ENCODE measurements at regions of chr18 and their contacts with region 1.

Region 1: DNA sequence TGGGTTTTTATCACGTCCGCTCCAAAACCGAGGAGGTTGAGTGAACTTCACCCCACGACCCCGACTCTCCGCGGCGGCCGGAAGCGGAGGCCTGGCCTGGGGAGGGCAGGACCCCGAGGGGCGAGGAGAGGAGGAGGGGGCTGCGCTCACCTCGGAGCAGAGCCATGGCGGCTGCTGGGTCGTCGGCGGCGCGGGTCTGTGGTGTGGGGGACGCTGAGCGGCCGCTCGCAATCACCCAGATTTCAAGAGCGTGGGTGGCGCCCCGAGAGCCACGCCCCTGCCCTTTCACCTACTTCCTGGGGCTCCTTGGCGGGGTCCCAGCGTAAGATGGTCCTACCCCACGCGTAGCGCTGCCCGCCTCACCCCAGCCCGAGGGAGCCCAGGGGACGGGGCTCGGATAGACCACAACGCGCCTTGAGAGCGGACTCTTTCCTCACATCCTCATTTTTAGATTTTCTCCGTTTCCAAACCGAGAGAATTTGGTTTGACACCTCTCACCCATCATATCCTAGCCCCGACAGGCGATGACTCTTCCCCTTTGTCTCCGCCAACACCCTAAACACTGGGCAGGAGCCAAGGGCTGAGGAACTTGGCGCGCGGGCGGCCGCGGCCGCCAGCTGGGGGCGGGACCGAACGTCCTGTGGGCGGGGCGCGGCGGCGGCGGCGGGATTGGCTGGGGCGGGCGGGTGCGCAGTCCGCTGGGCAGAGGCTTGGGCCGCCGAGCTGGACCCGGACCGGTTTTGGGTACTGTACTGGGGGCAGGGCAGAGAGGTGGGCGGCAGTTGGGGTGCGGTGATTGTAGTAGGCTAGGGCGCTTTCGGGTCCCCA is at the start of gene ACAA2:
- DNase-seq: peak; percentile 48 to 87 (median 60)
- ATAC-seq: peak; percentile 93
- H3K4me3 ChIP-seq: peak within 1 kb of the TSS; percentile 87
- H3K4me3 Mint-ChIP-seq: peak within 1 kb of the TSS; percentile 89 to 99 (median 96)
- H3K27ac ChIP-seq: peak within 1 kb of the TSS; percentile 90
- H3K27ac Mint-ChIP-seq: peak within 1 kb of the TSS; percentile 91 to 99 (median 97)
- H3K4me1 ChIP-seq: peaks cover 20 to 39% of the 10 kb centered on the region in 2 donors
- H3K4me1 Mint-ChIP-seq: peaks cover 42 to 70% (median 63%) of the 10 kb centered on the region in 7 donors
- H3K27me3 ChIP-seq: no peaks in the 10 kb centered on the region
- H3K27me3 Mint-ChIP-seq: no peaks in the 10 kb centered on the region
- total RNA-seq, gene ACAA2: 15.4 to 94.7 (median 24.4) TPM

Region 2: GRCh38 chr18:48538531-48539405 is 1274.8 kb before region 1 on chr18 and contains the start of gene CTIF:
- CTCF ChIA-PET with region 1: no interaction called
- POLR2A ChIA-PET with region 1: no interaction called
- intact Hi-C with region 1: loop called in 1 of 2 experiments (anchors 5 kb)
- DNase-seq: peak; percentile 17 to 71 (median 37)
- ATAC-seq: peak; percentile 78
- H3K4me3 ChIP-seq: peak within 1 kb of the TSS; percentile 75
- H3K4me3 Mint-ChIP-seq: peak within 1 kb of the TSS; percentile 73 to 95 (median 88)
- H3K27ac ChIP-seq: peak within 1 kb of the TSS; percentile 19
- H3K27ac Mint-ChIP-seq: peak within 1 kb of the TSS in 1 of 9 donors; percentile 46
- H3K4me1 ChIP-seq: peaks cover 0 to 5% of the 10 kb centered on the region in 2 donors
- H3K4me1 Mint-ChIP-seq: peaks cover 0 to 17% (median 0%) of the 10 kb centered on the region in 7 donors
- H3K27me3 ChIP-seq: no peaks in the 10 kb centered on the region
- H3K27me3 Mint-ChIP-seq: peaks cover 1 to 31% (median 6%) of the 10 kb centered on the region in 5 donors
- total RNA-seq, gene CTIF: 1.3 to 11.2 (median 2.5) TPM

Region 3: DNA sequence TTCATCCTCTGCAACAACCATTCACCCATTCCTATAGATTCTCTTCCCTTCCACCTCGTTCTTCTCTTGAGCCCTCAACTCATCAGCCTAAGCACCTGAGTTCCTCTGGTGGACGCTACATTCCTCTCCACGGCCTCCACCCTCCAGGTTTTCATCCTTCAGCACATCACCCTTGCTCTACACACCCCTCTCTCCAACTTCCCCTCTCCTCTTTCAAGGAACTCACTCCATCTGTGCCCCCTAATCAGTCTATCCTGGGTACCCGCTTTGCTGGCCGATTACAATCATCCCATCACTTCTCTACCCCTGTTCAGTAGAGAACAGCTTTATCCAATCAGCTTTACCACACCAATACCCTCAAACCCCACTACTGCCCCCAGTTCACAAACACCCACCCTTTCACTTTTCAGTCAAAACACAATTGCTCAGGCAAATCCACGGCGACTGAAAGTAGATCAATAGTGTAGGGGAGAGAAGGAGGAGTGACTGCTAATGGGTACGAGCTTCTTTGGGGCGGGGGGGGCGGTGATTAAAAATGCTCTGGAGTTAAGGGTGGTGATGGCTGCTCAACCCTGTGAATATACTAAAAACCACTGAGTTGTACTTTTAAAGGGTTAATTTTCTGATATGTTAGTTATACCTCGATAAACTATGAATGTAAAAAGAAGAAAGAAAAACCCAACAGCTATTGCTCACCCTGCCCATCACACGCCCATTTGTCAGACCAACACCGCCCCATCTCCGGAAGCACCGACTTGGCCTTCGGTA is 353.9 kb before region 1 on chr18:
- CTCF ChIA-PET with region 1: no interaction called
- POLR2A ChIA-PET with region 1: interaction called, 3 read pairs
- intact Hi-C with region 1: loop called (anchors 1 kb)
- DNase-seq: peak in 3 of 9 donors; percentile 4 to 17 (median 5)
- ATAC-seq: peak; percentile 19
- H3K4me3 ChIP-seq: peak overlapping the region; percentile 86
- H3K4me3 Mint-ChIP-seq: peak overlapping the region; percentile 88 to 95 (median 94)
- H3K27ac ChIP-seq: peak overlapping the region; percentile 80
- H3K27ac Mint-ChIP-seq: peak overlapping the region; percentile 67 to 89 (median 83)
- H3K4me1 ChIP-seq: peaks cover 14 to 26% of the 10 kb centered on the region in 2 donors
- H3K4me1 Mint-ChIP-seq: peaks cover 34 to 62% (median 47%) of the 10 kb centered on the region in 7 donors
- H3K27me3 ChIP-seq: no peaks in the 10 kb centered on the region
- H3K27me3 Mint-ChIP-seq: peaks cover 0 to 6% (median 0%) of the 10 kb centered on the region in 5 donors

Region 4: GRCh38 chr18:49858309-49859020 is 44.9 kb after region 1 on chr18:
- CTCF ChIA-PET with region 1: no interaction called
- POLR2A ChIA-PET with region 1: interaction called, 7 read pairs
- intact Hi-C with region 1: loop called (anchors 1 to 2 kb)
- DNase-seq: peak; percentile 13 to 68 (median 33)
- ATAC-seq: no peak
- H3K4me3 ChIP-seq: no peak overlapping the region
- H3K4me3 Mint-ChIP-seq: no peak overlapping the region
- H3K27ac ChIP-seq: no peak overlapping the region
- H3K27ac Mint-ChIP-seq: peak overlapping the region in 2 of 9 donors; percentile 38 to 72
- H3K4me1 ChIP-seq: no peaks in the 10 kb centered on the region
- H3K4me1 Mint-ChIP-seq: peaks cover 0 to 6% (median 0%) of the 10 kb centered on the region in 7 donors
- H3K27me3 ChIP-seq: no peaks in the 10 kb centered on the region
- H3K27me3 Mint-ChIP-seq: peaks cover 0 to 3% (median 0%) of the 10 kb centered on the region in 5 donors

Region 5: GRCh38 chr18:49997558-49997957 is 184.0 kb after region 1 on chr18:
- CTCF ChIA-PET with region 1: no interaction called
- POLR2A ChIA-PET with region 1: no interaction called
- intact Hi-C with region 1: no loop called
- DNase-seq: no peak
- ATAC-seq: no peak
- H3K4me3 ChIP-seq: no peak overlapping the region
- H3K4me3 Mint-ChIP-seq: no peak overlapping the region
- H3K27ac ChIP-seq: no peak overlapping the region
- H3K27ac Mint-ChIP-seq: no peak overlapping the region
- H3K4me1 ChIP-seq: no peaks in the 10 kb centered on the region
- H3K4me1 Mint-ChIP-seq: no peaks in the 10 kb centered on the region
- H3K27me3 ChIP-seq: no peaks in the 10 kb centered on the region
- H3K27me3 Mint-ChIP-seq: peaks cover 0 to 9% (median 6%) of the 10 kb centered on the region in 5 donors

Region 6: GRCh38 chr18:50038448-50038847 is 224.9 kb after region 1 on chr18:
- CTCF ChIA-PET with region 1: no interaction called
- POLR2A ChIA-PET with region 1: no interaction called
- intact Hi-C with region 1: no loop called
- DNase-seq: no peak
- ATAC-seq: no peak
- H3K4me3 ChIP-seq: no peak overlapping the region
- H3K4me3 Mint-ChIP-seq: no peak overlapping the region
- H3K27ac ChIP-seq: no peak overlapping the region
- H3K27ac Mint-ChIP-seq: no peak overlapping the region
- H3K4me1 ChIP-seq: no peaks in the 10 kb centered on the region
- H3K4me1 Mint-ChIP-seq: peaks cover 0 to 6% (median 0%) of the 10 kb centered on the region in 7 donors
- H3K27me3 ChIP-seq: no peaks in the 10 kb centered on the region
- H3K27me3 Mint-ChIP-seq: peaks cover 10 to 21% (median 15%) of the 10 kb centered on the region in 5 donors

Region 7: GRCh38 chr18:50307738-50308470 is 494.4 kb after region 1 on chr18:
- CTCF ChIA-PET with region 1: no interaction called
- POLR2A ChIA-PET with region 1: no interaction called
- intact Hi-C with region 1: loop called in 1 of 2 experiments (anchors 5 kb)
- DNase-seq: peak; percentile 70 to 93 (median 89)
- ATAC-seq: peak; percentile 96
- H3K4me3 ChIP-seq: peak overlapping the region; percentile 45
- H3K4me3 Mint-ChIP-seq: peak overlapping the region; percentile 76 to 97 (median 92)
- H3K27ac ChIP-seq: peak overlapping the region; percentile 65
- H3K27ac Mint-ChIP-seq: peak overlapping the region; percentile 52 to 93 (median 82)
- H3K4me1 ChIP-seq: peaks cover 0 to 8% of the 10 kb centered on the region in 2 donors
- H3K4me1 Mint-ChIP-seq: peaks cover 0 to 20% (median 16%) of the 10 kb centered on the region in 7 donors
- H3K27me3 ChIP-seq: peaks cover 0 to 3% of the 10 kb centered on the region in 2 donors
- H3K27me3 Mint-ChIP-seq: peaks cover 0 to 35% (median 19%) of the 10 kb centered on the region in 5 donors

Region 8: GRCh38 chr18:50961974-50962373 is 1148.4 kb after region 1 on chr18:
- CTCF ChIA-PET with region 1: no interaction called
- POLR2A ChIA-PET with region 1: no interaction called
- intact Hi-C with region 1: no loop called
- DNase-seq: peak in 1 of 9 donors; percentile 12
- ATAC-seq: no peak
- H3K4me3 ChIP-seq: no peak overlapping the region
- H3K4me3 Mint-ChIP-seq: no peak overlapping the region
- H3K27ac ChIP-seq: no peak overlapping the region
- H3K27ac Mint-ChIP-seq: peak overlapping the region in 1 of 9 donors; percentile 51
- H3K4me1 ChIP-seq: no peaks in the 10 kb centered on the region
- H3K4me1 Mint-ChIP-seq: no peaks in the 10 kb centered on the region
- H3K27me3 ChIP-seq: no peaks in the 10 kb centered on the region
- H3K27me3 Mint-ChIP-seq: peaks cover 0 to 9% (median 3%) of the 10 kb centered on the region in 5 donors

Region 9: GRCh38 chr18:51029694-51030536 is 1216.4 kb after region 1 on chr18 and contains the start of gene SMAD4:
- CTCF ChIA-PET with region 1: no interaction called
- POLR2A ChIA-PET with region 1: no interaction called
- intact Hi-C with region 1: loop called in 1 of 2 experiments (anchors 5 kb)
- DNase-seq: peak; percentile 95 to 99 (median 97)
- ATAC-seq: peak; percentile 89
- H3K4me3 ChIP-seq: peak within 1 kb of the TSS; percentile 63
- H3K4me3 Mint-ChIP-seq: peak within 1 kb of the TSS; percentile 96 to 100 (median 99)
- H3K27ac ChIP-seq: peak within 1 kb of the TSS; percentile 81
- H3K27ac Mint-ChIP-seq: peak within 1 kb of the TSS; percentile 95 to 100 (median 98)
- H3K4me1 ChIP-seq: peaks cover 13 to 40% of the 10 kb centered on the region in 2 donors
- H3K4me1 Mint-ChIP-seq: peaks cover 35 to 62% (median 57%) of the 10 kb centered on the region in 7 donors
- H3K27me3 ChIP-seq: no peaks in the 10 kb centered on the region
- H3K27me3 Mint-ChIP-seq: no peaks in the 10 kb centered on the region
- total RNA-seq, gene SMAD4: 82.5 to 170 (median 92.5) TPM